ENCODE measurements at regions of chr6 and their contacts with region 1.

Region 1: DNA sequence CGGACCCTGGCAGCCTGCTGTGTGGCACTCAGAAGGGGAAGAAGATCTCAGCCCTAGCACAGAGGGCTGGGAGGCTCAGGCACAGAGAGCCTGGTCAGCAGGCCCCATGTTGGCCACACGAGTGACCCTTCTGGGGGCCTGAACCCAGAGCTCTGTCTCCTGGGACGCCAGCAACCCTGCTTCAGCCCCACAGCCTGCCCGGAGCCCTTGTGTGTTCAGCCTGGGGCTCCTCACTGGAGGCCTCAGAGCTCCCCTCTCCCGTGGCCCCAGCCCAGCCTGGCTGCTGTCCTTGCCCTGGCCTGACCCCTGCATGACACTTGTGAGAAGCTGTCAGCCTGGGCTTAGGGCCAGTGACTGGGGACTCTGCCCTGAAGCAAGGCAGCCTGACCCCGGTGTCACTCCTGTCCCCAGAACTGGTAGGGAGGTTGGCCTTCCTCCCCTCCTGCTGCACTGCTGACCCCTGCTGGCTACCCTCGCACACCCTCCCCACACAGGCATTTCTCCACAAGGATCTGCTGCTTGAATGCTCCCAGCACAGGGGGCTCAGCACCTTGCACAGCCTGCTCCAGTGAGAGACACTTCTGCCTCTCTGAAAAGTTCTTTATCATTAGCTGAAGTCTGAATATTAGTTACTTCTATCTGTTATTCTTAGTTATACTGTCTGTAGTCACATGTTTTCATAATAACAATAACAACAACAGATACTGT is 15.4 kb upstream of the IP6K3 start:
- DNase-seq: peak; percentile 56
- H3K4me3 ChIP-seq: no peak overlapping the region
- H3K27ac ChIP-seq: peak overlapping the region; percentile 11 to 24
- H3K4me1 ChIP-seq: peaks cover 6% of the 10 kb centered on the region
- H3K27me3 ChIP-seq: no peaks in the 10 kb centered on the region
- CTCF ChIP-seq: peak in 3 of 4 experiments; percentile 75 to 84 (median 83)
- POLR2A ChIP-seq: no peak

Region 2: GRCh38 chr6:33711140-33712129 is 50.6 kb before region 1 on chr6 and contains the start of gene UQCC2:
- intact Hi-C with region 1: loop called (anchors 5 kb)
- DNase-seq: peak; percentile 97
- H3K4me3 ChIP-seq: peak within 1 kb of the TSS; percentile 75 to 84
- H3K27ac ChIP-seq: peak within 1 kb of the TSS; percentile 91 to 92
- H3K4me1 ChIP-seq: peaks cover 18% of the 10 kb centered on the region
- H3K27me3 ChIP-seq: no peaks in the 10 kb centered on the region
- CTCF ChIP-seq: peak in 3 of 4 experiments; percentile 77 to 93 (median 90)
- POLR2A ChIP-seq: peak; percentile 59
- total RNA-seq, gene UQCC2: 24.5 to 25.7 TPM

Region 3: GRCh38 chr6:33744001-33744848 is 17.9 kb before region 1 on chr6:
- intact Hi-C with region 1: loop called (anchors 1 kb)
- DNase-seq: peak; percentile 85
- H3K4me3 ChIP-seq: no peak overlapping the region
- H3K27ac ChIP-seq: peak overlapping the region; percentile 74 to 85
- H3K4me1 ChIP-seq: peaks cover 26% of the 10 kb centered on the region
- H3K27me3 ChIP-seq: no peaks in the 10 kb centered on the region
- CTCF ChIP-seq: peak; percentile 78 to 95 (median 92)
- POLR2A ChIP-seq: no peak